Activated T-helper 1 cell treated with anti-CD3 and anti-CD28 coated beads, Interleukin-12 subunit alpha, Interleukin-12 subunit beta, Interleukin-2, Interleukin-4 antibody, amounts not matched to agents 30 ng/mL and 10 ng/mL and 1 ng/mL, durations not matched to agents 14 hours and 24 hours and 36 hours (primary cell): ENCODE measurements at regions of chr2 and their contacts with region 1.

Region 1: GRCh38 chr2:231514103-231514950 is 15.9 kb downstream of the NMUR1 start:
- DNase-seq: peak; percentile 99
- H3K4me3 Mint-ChIP-seq: peak overlapping the region; percentile 90
- H3K27ac Mint-ChIP-seq: peak overlapping the region; percentile 92
- H3K4me1 Mint-ChIP-seq: peaks cover 25% of the 10 kb centered on the region
- H3K27me3 Mint-ChIP-seq: peaks cover 9% of the 10 kb centered on the region

Region 2: GRCh38 chr2:231463698-231464575 is 50.4 kb before region 1 on chr2 and contains the start of gene NCL:
- intact Hi-C with region 1: loop called (anchors 1 kb)
- DNase-seq: peak; percentile 79
- H3K4me3 Mint-ChIP-seq: peak within 1 kb of the TSS; percentile 99
- H3K27ac Mint-ChIP-seq: peak within 1 kb of the TSS; percentile 99
- H3K4me1 Mint-ChIP-seq: peaks cover 43% of the 10 kb centered on the region
- H3K27me3 Mint-ChIP-seq: no peaks in the 10 kb centered on the region
- total RNA-seq, gene NCL: 1,388 and 1,421 TPM in 2 replicates

Region 3: DNA sequence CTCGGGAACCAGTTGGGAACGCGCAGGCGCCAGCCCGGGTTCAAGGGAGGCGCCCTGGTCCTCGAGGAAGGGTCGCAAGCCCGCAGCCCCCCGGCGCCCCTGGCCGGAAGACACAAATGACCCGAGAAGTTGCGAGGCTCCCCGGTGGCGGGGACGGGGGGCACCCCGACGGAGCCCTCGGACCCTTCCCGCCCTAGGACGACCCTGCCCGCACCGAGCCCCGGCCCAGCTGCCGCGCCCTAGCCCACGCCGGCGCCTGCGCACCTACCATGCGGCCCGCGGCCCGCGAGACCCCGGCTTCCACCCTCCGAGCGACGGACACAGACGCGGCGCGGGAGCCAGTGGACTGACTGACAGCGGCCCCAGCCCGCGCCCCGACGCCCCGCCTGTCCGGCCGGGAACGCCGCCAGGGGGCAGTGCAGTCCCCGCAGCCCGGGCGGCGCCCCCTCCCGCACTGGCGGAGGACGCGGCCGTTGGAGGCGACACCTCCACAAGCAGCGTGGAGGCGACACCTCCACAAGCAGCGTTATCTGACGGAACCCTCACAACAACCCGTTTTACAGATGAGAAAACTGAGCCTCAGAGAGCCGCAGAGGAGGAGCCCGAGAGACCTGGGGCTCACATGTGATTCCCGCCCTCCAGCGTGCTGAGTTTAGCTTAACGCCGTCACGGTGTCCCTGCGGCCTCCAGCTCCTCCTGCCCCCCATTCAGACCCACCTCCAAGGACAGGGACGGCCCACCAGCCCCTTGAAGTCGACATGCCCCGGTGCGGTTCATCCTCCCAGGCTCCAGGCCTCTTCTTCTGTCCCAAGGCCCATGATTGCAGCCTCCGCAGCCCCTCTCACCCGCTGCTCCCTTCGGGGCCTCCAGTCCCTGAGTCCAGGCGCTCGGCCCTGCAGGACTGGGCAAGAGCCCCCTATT is 16.0 kb after region 1 on chr2 and contains the start of gene NMUR1:
- intact Hi-C with region 1: loop called (anchors 1 kb)
- DNase-seq: peak; percentile 70
- H3K4me3 Mint-ChIP-seq: no peak within 1 kb of the TSS
- H3K27ac Mint-ChIP-seq: peak within 1 kb of the TSS; percentile 6
- H3K4me1 Mint-ChIP-seq: peaks cover 20% of the 10 kb centered on the region
- H3K27me3 Mint-ChIP-seq: peaks cover 26% of the 10 kb centered on the region
- total RNA-seq, gene NMUR1: 0.05 TPM in 1 of 2 replicates, not detected in the other

Region 4: DNA sequence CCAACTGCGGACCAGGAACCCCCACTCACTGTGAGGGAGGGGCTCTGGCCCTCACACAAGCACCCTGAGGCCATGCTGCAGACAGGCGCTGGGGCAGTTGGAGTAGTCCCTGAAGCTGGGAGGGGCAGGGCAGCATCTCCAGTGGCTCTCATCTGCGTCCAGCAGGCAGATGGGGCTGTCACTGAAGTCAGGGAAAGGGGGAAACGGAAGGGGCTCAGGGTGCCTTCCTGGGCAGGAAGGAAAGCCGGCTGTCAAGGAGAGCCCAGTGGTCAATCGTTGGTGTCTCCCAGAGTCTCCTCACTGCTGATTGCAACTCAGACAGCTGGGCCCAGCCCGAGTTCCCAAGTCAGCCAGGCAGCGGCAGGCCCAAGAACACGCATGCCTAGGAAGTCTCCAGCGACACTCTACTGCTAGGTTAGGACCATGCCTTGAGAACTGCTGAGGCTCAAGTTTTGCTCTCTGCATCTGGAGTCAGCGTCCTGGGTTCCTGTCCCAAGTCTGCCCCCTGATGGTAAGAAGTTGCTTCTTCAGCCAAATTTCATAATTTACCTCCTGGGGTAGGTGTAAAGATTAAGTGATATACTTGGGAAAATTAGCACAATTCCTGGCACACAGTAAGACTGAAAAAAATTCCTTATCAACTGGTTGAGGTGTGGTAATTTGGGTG is 43.4 kb after region 1 on chr2:
- intact Hi-C with region 1: loop called (anchors 1 kb)
- DNase-seq: peak; percentile 64
- H3K4me3 Mint-ChIP-seq: no peak overlapping the region
- H3K27ac Mint-ChIP-seq: no peak overlapping the region
- H3K4me1 Mint-ChIP-seq: peaks cover 32% of the 10 kb centered on the region
- H3K27me3 Mint-ChIP-seq: no peaks in the 10 kb centered on the region

Region 5: GRCh38 chr2:231612179-231613053 is 98.1 kb after region 1 on chr2:
- intact Hi-C with region 1: loop called (anchors 1 kb)
- DNase-seq: peak; percentile 87
- H3K4me3 Mint-ChIP-seq: peak overlapping the region; percentile 80
- H3K27ac Mint-ChIP-seq: peak overlapping the region; percentile 97
- H3K4me1 Mint-ChIP-seq: peaks cover 65% of the 10 kb centered on the region
- H3K27me3 Mint-ChIP-seq: no peaks in the 10 kb centered on the region

Region 6: DNA sequence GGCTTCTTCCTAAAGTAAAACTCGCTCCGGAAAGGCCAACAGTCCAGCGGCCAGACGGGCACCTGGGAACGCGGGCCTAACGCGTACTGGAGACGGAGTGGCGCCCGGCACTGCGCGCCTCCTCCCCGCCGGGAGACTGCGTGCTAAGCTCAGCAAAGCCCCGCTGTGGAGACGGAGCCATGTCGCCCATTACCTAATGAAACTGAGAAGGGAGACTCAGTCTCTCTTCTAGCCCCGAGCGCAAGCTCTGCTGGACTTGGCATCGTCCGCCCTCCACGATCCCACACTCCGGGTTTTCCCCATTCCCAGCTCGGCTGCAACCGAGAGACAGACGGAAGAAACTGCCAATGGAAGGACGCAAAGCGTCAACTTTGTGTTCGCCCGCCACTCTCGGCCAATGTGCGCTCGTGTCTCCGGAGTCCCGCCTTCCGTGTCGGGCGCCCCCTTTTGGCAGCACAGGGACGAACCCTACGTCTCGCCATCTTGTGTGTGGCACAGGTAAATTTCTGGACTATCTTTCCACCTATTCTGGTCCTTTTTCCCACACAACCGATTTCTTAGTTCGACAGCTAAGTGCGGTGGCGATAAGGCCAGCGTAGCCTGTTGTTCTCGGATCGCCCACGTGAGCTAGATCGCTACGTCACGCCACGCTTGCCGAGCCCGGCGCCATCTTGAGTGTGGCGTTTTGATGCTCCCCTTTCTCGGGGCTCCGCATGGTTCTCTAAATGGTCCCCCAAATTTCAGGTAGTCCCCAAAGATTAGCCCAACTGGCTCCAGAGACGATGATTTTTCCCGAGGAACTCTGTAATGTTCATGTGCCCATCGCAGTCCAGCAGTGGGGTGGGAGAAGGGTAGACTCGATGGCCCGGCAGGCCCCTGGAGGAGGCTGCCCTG is 192.7 kb after region 1 on chr2:
- intact Hi-C with region 1: loop called (anchors 2 kb)
- DNase-seq: peak; percentile 96
- H3K4me3 Mint-ChIP-seq: peak overlapping the region; percentile 99
- H3K27ac Mint-ChIP-seq: peak overlapping the region; percentile 100
- H3K4me1 Mint-ChIP-seq: peaks cover 13% of the 10 kb centered on the region
- H3K27me3 Mint-ChIP-seq: peaks cover 3% of the 10 kb centered on the region

Region 7: DNA sequence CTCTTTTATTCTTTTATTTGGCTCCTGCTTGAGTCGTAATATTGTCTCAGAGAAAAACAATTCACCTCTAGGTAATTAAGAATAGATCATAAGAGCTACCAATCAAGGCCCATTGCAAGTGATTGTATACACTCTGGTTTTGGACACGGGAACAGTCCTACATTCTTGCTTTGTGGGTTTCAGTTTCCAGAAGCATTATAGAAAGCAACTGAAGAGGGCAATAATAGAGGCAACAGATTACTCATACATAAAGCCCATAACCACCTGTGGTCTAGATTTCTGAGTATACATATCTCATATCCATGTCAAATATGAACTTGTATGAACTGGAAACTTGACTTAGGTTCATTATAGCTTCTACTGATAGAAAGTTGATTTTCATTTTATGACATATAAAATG is 512.6 kb after region 1 on chr2:
- intact Hi-C with region 1: loop called (anchors 1 kb)
- DNase-seq: peak; percentile 7
- H3K4me3 Mint-ChIP-seq: peak overlapping the region; percentile 25
- H3K27ac Mint-ChIP-seq: no peak overlapping the region
- H3K4me1 Mint-ChIP-seq: peaks cover 28% of the 10 kb centered on the region
- H3K27me3 Mint-ChIP-seq: peaks cover 10% of the 10 kb centered on the region